Aorta (tissue), 5 donors: ENCODE measurements at regions of chr4 and their contacts with region 1.

Region 1: DNA sequence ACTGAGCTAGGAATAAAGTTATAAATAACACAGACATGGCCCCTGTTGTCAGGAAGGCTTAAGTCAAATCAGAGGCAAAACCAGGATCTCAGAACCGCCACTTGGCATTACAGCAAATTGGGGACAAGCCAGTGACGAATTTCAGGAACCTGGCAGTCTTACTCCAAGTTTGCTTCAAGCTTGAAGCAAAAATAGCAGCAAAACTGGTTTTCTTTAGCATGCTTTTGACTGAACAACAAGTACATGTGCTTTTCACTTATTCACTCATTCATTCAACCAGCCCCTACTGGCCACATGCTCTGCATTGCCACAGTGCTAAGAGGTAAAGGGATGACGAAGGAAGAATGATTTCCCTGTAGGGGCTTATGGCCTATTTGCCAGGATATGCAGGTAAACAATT is 253.9 kb upstream of the PPARGC1A start:
- DNase-seq: no peak
- ATAC-seq: peak; percentile 56
- H3K4me3 ChIP-seq: no peak overlapping the region
- H3K27ac ChIP-seq: no peak overlapping the region
- H3K4me1 ChIP-seq: peaks cover 0 to 3% of the 10 kb centered on the region in 2 donors
- H3K27me3 ChIP-seq: no peaks in the 10 kb centered on the region

Region 2: DNA sequence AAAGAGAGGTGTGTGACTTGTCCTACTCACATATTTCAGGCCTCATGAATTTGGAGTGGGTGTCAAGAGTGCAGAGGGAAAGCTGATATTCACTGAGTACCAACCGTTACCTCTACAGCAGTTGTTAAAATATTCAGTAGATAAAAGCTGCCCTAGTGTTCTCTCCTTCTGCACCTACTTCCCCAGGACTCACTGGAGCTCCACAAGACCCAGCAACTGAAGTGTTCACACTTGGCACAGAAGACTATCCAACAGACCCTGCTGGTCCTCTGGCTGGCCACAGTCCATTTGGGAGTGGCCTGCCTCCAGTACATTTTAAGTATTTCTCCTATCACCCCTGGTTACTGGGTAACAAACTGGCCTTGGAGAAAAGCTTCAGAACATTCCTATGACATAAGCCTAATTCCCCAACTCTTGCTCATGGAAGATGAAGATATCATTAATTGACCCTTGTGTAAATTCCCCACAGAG is 324.7 kb before region 1 on chr4:
- intact Hi-C with region 1: no loop called
- DNase-seq: peak in 1 of 2 donors; percentile 43
- ATAC-seq: no peak
- H3K4me3 ChIP-seq: no peak overlapping the region
- H3K27ac ChIP-seq: no peak overlapping the region
- H3K4me1 ChIP-seq: no peaks in the 10 kb centered on the region
- H3K27me3 ChIP-seq: no peaks in the 10 kb centered on the region

Region 3: GRCh38 chr4:24244663-24245490 is 101.1 kb after region 1 on chr4:
- intact Hi-C with region 1: loop called in 1 of 2 experiments (anchors 10 kb)
- DNase-seq: no peak
- ATAC-seq: no peak
- H3K4me3 ChIP-seq: no peak overlapping the region
- H3K27ac ChIP-seq: no peak overlapping the region
- H3K4me1 ChIP-seq: peaks cover 0 to 5% of the 10 kb centered on the region in 2 donors
- H3K27me3 ChIP-seq: no peaks in the 10 kb centered on the region

Region 4: GRCh38 chr4:24266951-24267738 is 123.4 kb after region 1 on chr4:
- intact Hi-C with region 1: no loop called
- DNase-seq: no peak
- ATAC-seq: no peak
- H3K4me3 ChIP-seq: no peak overlapping the region
- H3K27ac ChIP-seq: no peak overlapping the region
- H3K4me1 ChIP-seq: no peaks in the 10 kb centered on the region
- H3K27me3 ChIP-seq: no peaks in the 10 kb centered on the region